Pancreas (tissue), 10 donors: ENCODE measurements at regions of chr11 and their contacts with region 1.

Region 1: DNA sequence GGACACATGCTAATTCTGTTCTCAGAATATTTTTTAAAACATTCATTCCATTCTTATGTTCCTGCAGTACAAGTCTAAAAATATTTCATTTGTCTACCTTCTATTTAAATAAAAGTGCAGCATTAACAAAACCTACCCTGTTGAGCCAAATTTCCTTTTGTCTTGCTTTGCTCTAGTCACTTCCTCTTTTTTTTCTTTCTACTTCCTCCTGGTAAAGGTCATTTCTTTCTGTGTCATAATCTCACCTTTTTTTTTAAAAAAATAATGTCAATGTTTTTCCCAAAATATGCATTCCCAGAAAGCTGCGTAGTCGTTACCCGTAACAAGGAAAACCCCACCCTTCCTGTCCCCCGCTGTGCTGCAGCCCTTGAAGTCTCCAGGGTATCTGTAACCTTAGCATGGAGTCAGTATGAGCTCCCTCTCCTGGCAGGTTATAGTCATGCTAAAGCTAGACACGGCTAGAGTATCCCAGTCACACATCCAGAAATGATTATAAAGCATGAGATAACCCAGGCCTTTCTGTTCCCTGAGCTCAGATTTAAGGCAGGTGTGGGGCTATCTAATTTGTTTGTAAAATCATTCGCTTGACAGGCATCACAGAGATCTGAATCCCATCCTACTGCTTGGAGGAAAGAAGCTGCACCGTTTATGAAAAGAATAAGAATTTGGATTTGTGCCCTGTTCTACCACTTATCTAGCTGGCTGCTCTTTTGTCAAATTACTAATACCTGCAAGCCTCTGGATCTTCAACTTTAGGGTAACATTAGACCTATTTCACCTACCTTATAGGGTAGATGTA is 51.1 kb upstream of the EED start:
- DNase-seq: peak in 4 of 6 donors; percentile 35 to 70 (median 66)
- ATAC-seq: peak; percentile 97 to 100 (median 100)
- H3K4me3 ChIP-seq: peak overlapping the region in 1 of 4 donors; percentile 10
- H3K27ac ChIP-seq: peak overlapping the region in 2 of 4 donors; percentile 13 to 43
- H3K4me1 ChIP-seq: peaks cover 0 to 13% (median 0%) of the 10 kb centered on the region in 3 donors
- H3K27me3 ChIP-seq: no peaks in the 10 kb centered on the region
- CTCF ChIP-seq: peak; percentile 35 to 58 (median 53)

Region 2: GRCh38 chr11:85902353-85902752 is 291.1 kb before region 1 on chr11:
- intact Hi-C with region 1: no loop called
- DNase-seq: no peak
- ATAC-seq: no peak
- H3K4me3 ChIP-seq: no peak overlapping the region
- H3K27ac ChIP-seq: no peak overlapping the region
- H3K4me1 ChIP-seq: no peaks in the 10 kb centered on the region
- H3K27me3 ChIP-seq: no peaks in the 10 kb centered on the region
- CTCF ChIP-seq: no peak

Region 3: DNA sequence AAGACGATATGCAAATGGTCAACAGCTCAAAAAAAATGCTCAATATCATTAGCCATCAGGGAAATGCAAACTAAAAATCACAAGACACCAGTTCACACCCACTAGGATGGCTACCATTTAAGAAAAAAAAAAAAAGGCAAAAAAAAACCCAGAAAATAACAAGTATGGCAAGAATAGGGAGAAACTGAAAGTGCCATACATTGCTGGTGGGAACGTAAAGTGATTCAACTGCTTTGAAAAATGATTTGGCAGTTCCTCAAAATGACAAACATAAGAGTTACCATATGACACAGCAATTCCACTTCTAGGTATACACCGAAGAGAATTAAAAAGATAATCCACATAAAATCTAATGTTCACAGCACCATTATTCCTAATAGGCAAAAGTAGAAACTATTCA is 172.1 kb before region 1 on chr11:
- intact Hi-C with region 1: no loop called
- DNase-seq: no peak
- ATAC-seq: no peak
- H3K4me3 ChIP-seq: no peak overlapping the region
- H3K27ac ChIP-seq: no peak overlapping the region
- H3K4me1 ChIP-seq: no peaks in the 10 kb centered on the region
- H3K27me3 ChIP-seq: no peaks in the 10 kb centered on the region
- CTCF ChIP-seq: no peak

Region 4: GRCh38 chr11:86035164-86035563 is 158.3 kb before region 1 on chr11:
- intact Hi-C with region 1: loop called in 1 of 3 experiments (anchors 10 kb)
- DNase-seq: no peak
- ATAC-seq: peak in 3 of 4 donors; percentile 21 to 34 (median 25)
- H3K4me3 ChIP-seq: no peak overlapping the region
- H3K27ac ChIP-seq: no peak overlapping the region
- H3K4me1 ChIP-seq: peaks cover 16 to 41% (median 28%) of the 10 kb centered on the region in 3 donors
- H3K27me3 ChIP-seq: no peaks in the 10 kb centered on the region
- CTCF ChIP-seq: no peak

Region 5: DNA sequence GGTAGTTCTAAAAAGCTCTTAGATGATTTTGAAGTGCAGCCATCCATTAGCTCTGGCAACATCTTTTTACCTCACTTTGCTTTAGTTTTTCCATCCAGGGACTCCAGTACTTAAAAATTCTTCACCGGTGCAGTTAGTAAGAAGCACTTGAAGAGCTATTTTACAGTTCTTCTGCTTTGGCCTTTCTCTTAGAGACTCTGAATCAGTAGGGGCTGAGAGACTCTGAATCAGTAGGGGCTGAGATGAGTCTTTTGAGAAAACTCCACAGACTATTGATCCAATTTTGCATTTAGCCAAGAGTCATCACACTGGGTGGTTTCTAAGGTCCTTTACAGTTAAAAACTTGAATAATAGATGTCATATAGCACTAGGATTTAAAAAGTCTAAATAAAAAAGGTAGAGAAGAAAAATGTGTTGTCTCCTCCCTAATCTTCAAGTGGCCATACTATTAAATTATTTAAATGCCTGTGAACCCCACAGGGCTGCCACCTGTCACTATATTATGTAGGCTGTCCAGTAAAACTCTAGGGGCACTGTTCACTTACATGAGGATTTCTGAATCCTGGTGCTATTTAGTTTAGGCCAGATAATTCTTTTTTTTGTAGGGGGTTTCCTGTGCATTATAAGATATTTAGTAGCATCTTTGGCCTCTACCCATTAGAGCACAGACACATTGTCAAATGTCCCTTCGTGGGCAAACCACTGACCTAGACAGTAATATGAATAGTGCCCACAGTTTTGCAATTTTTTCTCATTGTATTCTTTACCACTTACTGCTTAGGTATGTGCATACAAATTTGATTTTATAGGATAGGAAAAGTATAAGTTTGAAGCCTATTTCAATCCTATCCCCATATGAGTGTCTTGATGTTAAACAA is 82.2 kb after region 1 on chr11:
- intact Hi-C with region 1: no loop called
- DNase-seq: no peak
- ATAC-seq: peak; percentile 41 to 54 (median 50)
- H3K4me3 ChIP-seq: no peak overlapping the region
- H3K27ac ChIP-seq: peak overlapping the region in 2 of 4 donors; percentile 56 to 61
- H3K4me1 ChIP-seq: peaks cover 0 to 22% (median 5%) of the 10 kb centered on the region in 3 donors
- H3K27me3 ChIP-seq: no peaks in the 10 kb centered on the region
- CTCF ChIP-seq: no peak